Left colon (tissue), 2 donors: ENCODE measurements at regions of chr7 and their contacts with region 1.

Region 1: GRCh38 chr7:123751821-123752220 is 3.0 kb upstream of the WASL start:
- DNase-seq: no peak
- ATAC-seq: no peak

Region 2: DNA sequence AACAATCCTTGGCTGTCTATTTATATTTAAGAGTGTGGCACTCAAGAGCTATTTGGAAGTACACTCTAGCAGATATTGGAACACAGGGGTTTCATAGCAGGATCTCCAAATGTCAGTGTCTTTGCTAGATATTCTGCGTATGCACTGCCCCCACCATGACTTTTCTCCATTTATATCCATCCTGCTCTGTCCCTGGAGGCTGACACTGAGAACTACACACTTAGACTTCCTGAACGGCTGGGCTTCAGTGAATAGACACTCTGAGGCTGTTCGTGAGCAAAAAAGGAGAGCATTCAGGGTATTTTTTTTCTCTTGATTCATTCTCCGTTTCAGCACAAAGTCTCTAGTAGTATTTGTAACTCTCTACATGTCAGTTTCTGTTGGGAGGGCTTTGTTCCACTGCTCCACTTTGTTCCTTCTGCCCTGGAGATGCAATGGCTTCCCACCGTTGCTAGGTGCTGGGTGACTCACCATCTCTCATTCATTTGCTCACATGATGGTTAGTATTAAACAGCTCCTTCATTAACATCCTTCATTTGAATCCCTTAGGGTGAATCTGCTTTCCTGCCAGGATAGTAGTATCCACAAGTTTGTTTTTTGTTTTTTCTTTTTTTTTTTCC is 396.1 kb before region 1 on chr7:
- intact Hi-C with region 1: no loop called
- DNase-seq: no peak
- ATAC-seq: no peak

Region 3: GRCh38 chr7:123557398-123558288 is 194.2 kb before region 1 on chr7 and contains the start of gene NDUFA5:
- intact Hi-C with region 1: loop called in 1 of 2 experiments (anchors 10 kb)
- DNase-seq: peak; percentile 98 to 99
- ATAC-seq: peak; percentile 100
- total RNA-seq, gene NDUFA5: 98.6 to 117 TPM